HCT116 (cell line): ENCODE measurements at regions of chr10 and their contacts with region 1.

Region 1: DNA sequence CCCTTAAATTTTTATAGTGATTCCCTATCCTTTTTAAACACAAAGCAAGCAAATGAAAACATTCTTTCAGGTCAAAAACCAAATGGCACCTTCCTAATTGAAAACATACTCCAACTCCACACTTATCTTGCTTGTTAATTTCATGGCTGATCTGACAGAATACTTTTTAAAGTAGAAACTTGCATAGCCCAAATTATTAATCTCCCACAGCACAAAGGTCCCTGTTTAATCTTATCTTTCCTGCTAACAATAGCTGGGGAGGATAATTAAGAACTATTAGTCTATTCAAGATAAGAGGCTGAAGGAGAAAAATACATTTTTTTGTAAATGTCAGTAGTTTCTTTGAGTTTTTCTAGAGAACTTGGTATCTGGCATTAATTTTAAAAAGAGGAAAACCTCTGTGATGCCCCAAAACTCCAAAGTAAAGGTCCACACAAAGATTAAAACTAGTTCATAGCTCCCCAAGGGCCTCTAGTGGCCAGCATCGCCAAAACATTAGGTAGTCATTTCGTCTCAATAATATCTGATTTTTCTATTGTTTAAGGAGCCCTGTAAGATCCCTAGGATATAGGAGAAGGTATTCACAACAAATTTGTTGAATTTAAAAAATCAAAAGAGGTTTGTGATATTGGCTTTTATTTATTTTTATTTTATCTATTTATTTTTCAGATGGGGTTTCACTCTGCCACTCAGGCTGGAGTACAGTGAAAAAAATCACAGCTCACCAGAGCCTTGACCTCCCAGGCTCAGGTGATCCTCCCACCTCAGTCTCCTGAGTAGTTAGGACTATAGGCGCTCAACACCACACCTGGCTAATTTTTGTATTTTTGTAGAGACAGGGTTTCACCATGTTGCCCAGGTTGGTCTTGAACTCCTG is 14.7 kb downstream of the CDNF start:
- DNase-seq: peak; percentile 16
- ATAC-seq: peak; percentile 73
- H3K4me3 ChIP-seq: no peak overlapping the region
- H3K27ac ChIP-seq: no peak overlapping the region
- H3K4me1 ChIP-seq: peaks cover 0 to 10% of the 10 kb centered on the region in 2 experiments; a peak in 1 of 4 replicates
- H3K27me3 ChIP-seq: peaks cover 3% of the 10 kb centered on the region; the same call in 1 of the 2 replicates
- CTCF ChIP-seq: peak; percentile 65 to 73 (median 71); a peak in 5 of 6 replicates
- POLR2A ChIP-seq: no peak
- RAD21 ChIP-seq: peak; percentile 86

Region 2: GRCh38 chr10:14397066-14397465 is 426.1 kb before region 1 on chr10:
- CTCF ChIA-PET with region 1: no interaction called
- POLR2A ChIA-PET with region 1: no interaction called
- RAD21 ChIA-PET with region 1: no interaction called
- intact Hi-C with region 1: loop called (anchors 10 kb)
- DNase-seq: no peak
- ATAC-seq: peak; percentile 80
- H3K4me3 ChIP-seq: no peak overlapping the region
- H3K27ac ChIP-seq: no peak overlapping the region
- H3K4me1 ChIP-seq: peaks cover 7 to 11% of the 10 kb centered on the region in 2 experiments
- H3K27me3 ChIP-seq: peaks cover 35% of the 10 kb centered on the region
- CTCF ChIP-seq: no peak
- POLR2A ChIP-seq: no peak
- RAD21 ChIP-seq: no peak

Region 3: DNA sequence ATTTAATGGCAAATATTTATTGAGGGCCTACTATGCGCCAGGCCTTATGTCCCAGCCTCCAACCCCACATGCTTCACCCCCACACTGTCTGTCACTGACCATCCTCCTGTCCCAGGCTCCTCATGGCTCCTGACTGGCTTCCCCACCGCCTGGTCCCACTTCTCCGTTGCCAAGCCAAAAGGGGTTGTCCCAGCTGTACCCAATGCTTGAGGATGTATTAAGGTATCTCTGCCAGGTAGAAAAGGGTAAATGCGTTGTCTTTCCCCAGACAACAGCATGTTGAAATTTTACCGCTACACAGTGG is 323.6 kb before region 1 on chr10:
- CTCF ChIA-PET with region 1: interaction called, 4 read pairs
- POLR2A ChIA-PET with region 1: no interaction called
- RAD21 ChIA-PET with region 1: no interaction called
- intact Hi-C with region 1: loop called (anchors 1 kb)
- DNase-seq: no peak
- ATAC-seq: no peak
- H3K4me3 ChIP-seq: no peak overlapping the region
- H3K27ac ChIP-seq: no peak overlapping the region
- H3K4me1 ChIP-seq: no peaks in the 10 kb centered on the region
- H3K27me3 ChIP-seq: peaks cover 9% of the 10 kb centered on the region
- CTCF ChIP-seq: no peak
- POLR2A ChIP-seq: no peak
- RAD21 ChIP-seq: no peak

Region 4: GRCh38 chr10:14536241-14537213 is 286.6 kb before region 1 on chr10:
- CTCF ChIA-PET with region 1: interaction called, 7 read pairs
- POLR2A ChIA-PET with region 1: interaction called, 3 read pairs
- RAD21 ChIA-PET with region 1: interaction called in 1 of 2 experiments, 4 read pairs
- intact Hi-C with region 1: loop called (anchors 1 kb)
- DNase-seq: peak; percentile 54
- ATAC-seq: peak; percentile 99
- H3K4me3 ChIP-seq: no peak overlapping the region
- H3K27ac ChIP-seq: no peak overlapping the region
- H3K4me1 ChIP-seq: peaks cover 0 to 17% of the 10 kb centered on the region in 2 experiments; a peak in 2 of 4 replicates
- H3K27me3 ChIP-seq: no peaks in the 10 kb centered on the region
- CTCF ChIP-seq: peak; percentile 65 to 80 (median 69)
- POLR2A ChIP-seq: no peak
- RAD21 ChIP-seq: peak; percentile 88

Region 5: DNA sequence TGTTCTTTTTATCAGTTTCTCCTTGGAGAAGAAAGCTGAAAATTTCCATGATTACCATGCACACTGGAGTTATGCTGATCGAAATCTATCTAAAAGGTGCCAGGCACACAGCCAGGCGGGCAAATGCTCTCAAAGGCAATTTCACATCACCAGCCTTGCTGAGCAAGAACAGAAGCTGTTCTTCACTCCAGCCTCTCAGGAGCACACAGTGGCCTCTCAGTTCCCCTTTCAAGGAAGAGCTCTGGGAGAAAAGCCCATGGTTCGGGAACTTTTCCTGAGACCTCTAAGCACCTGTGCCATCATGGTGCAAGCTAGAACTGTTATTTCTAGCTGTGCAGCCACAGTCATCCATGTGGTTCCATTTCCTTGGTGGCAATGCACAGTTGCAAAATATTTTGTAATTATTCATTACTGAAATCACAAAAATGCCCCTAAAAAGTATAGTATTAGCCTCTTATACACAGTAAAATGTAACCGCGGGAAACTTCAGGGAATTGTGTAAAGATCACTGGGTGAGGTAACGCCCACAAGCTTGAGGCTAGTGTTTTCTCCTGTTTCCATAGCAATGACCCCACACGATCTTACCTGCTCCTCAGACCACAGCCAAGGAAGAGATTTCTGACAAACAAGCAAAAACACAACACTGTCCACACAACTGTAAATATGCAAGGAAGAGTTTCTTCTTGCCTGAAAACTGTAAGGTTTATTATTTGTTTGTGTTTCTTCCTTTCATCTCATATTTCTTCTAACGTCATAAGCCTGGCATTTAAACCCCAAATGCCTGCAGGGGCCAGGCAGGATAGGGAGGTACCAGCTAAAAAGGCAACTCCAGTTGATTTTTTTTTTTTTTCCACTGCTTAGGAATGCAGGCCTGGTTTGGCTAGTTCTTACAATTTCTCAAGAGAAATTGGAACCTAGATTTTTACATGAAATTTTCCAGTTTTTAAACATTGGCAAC is 169.6 kb before region 1 on chr10:
- CTCF ChIA-PET with region 1: no interaction called
- POLR2A ChIA-PET with region 1: no interaction called
- RAD21 ChIA-PET with region 1: no interaction called
- intact Hi-C with region 1: no loop called
- DNase-seq: no peak
- ATAC-seq: no peak
- H3K4me3 ChIP-seq: no peak overlapping the region
- H3K27ac ChIP-seq: no peak overlapping the region
- H3K4me1 ChIP-seq: peaks cover 12 to 18% of the 10 kb centered on the region in 2 experiments
- H3K27me3 ChIP-seq: no peaks in the 10 kb centered on the region
- CTCF ChIP-seq: no peak
- POLR2A ChIP-seq: no peak
- RAD21 ChIP-seq: no peak

Region 6: DNA sequence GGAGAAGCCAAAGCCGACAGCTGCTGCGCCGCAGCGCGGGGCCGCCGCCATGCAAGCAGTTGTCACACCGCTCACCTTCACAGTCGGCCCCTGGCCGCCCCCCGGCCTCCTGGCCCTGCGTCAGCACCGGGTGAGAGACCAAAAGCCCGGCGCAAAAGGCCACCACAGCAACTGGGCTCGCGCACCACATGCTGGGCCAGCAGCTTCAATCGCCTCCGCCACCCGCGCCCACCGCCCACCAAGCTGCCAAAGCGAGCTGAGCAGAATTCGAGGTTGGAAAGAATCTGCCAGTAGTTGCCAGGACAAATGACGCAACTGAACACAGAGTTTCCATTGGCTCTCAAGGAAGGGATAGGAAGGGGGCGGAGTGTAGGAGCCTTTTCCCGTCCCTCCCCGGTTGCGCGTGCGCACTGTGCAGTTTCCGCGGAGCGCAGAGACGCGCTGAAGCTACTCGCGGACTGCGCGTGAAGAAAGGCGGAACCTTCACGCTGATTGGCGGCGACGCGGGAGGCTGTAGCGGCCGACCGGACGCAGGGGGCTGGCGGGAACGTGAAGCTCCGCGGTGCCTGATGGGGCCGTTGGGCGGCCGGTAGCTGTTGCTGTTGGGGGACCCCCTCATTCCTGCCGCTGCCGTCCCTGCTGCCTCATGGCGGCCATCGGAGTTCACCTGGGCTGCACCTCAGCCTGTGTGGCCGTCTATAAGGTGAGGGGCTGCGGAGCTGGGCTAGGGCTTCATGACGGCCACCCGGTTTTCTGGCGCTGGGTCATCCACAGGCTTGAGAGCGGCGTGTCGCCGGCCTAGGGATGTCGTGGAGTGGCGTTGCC is 14.9 kb after region 1 on chr10 and contains the starts of genes CDNF, HSPA14 and MSANTD7:
- CTCF ChIA-PET with region 1: interaction called, 16 read pairs
- POLR2A ChIA-PET with region 1: interaction called, 4 read pairs
- RAD21 ChIA-PET with region 1: no interaction called
- intact Hi-C with region 1: no loop called
- DNase-seq: peak; percentile 98
- ATAC-seq: peak; percentile 94
- H3K4me3 ChIP-seq: peak within 1 kb of the TSS; percentile 84 to 93
- H3K27ac ChIP-seq: peak within 1 kb of the TSS; percentile 83
- H3K4me1 ChIP-seq: peaks cover 2 to 20% of the 10 kb centered on the region in 2 experiments; a peak in 3 of 4 replicates
- H3K27me3 ChIP-seq: no peaks in the 10 kb centered on the region
- CTCF ChIP-seq: no peak
- POLR2A ChIP-seq: peak; percentile 75
- RAD21 ChIP-seq: no peak
- total RNA-seq, gene CDNF: 1.1 TPM
- total RNA-seq, gene HSPA14: 19.9 TPM
- total RNA-seq, gene MSANTD7: 14.3 TPM